Dendritic cell treated with granulocyte-macrophage colony-stimulating factor and Interleukin-4, amounts not matched to agents 40 ng/mL and 50 ng/mL, for 4 days (primary cell): ENCODE measurements at regions of chr5 and their contacts with region 1.

Region 1: DNA sequence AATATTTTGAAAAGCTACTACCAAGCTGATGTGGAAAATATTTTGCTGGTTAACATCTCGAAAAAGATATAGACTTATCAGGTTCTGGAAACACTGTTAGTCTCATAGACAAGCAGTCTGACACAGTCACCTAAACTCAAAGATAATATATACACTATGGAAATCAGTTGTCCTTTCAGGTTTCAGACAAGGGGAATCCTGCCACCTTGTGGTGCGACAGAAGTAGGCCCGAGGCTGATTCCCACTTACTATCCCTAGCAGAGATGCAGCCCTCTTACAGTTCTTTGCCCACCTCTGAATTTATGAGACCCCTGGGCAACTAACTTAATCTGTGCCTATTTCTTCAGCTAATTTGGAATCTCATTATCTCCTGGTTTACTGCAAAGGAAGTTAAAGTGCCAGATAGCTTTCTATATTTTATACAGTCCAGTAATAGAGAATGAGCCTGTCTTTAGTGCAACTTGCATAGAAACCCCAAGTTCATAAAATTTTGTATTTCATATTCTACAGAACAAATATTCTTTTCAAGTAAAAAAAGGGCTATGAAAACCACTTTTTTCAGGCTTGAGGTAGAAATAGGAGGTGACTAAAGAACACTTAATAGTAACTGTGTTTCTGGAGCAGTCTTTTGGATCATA is 16.9 kb downstream of the RAD1 start:
- H3K4me3 Mint-ChIP-seq: no peak overlapping the region
- H3K27ac Mint-ChIP-seq: no peak overlapping the region
- H3K4me1 Mint-ChIP-seq: peaks cover 6% of the 10 kb centered on the region
- H3K27me3 Mint-ChIP-seq: no peaks in the 10 kb centered on the region

Region 2: DNA sequence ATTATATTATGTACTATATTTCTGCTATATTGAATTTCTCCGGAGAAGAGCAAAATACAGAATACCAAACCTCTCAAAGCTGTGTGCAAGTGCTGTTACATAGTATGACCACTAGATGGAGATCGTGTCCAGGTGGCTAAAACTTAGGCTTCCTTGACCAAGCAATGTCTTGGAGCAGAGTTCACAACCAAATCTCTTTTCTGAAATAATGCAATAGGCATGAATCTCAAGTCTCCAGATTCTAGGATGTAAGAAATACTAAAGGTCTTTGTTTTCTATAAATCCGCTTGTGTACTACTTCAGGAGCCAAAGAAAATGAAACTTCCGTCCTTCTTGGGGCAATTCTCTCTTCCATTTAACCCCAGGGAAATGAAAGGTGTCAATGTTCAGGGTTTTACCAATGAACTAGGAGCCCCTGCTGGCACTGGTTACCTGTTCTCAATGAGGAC is 423.8 kb before region 1 on chr5:
- intact Hi-C with region 1: loop called (anchors 5 kb)
- H3K4me3 Mint-ChIP-seq: no peak overlapping the region
- H3K27ac Mint-ChIP-seq: no peak overlapping the region
- H3K4me1 Mint-ChIP-seq: no peaks in the 10 kb centered on the region
- H3K27me3 Mint-ChIP-seq: peaks cover 2% of the 10 kb centered on the region

Region 3: GRCh38 chr5:34486160-34486848 is 412.1 kb before region 1 on chr5:
- intact Hi-C with region 1: loop called (anchors 1 kb)
- H3K4me3 Mint-ChIP-seq: no peak overlapping the region
- H3K27ac Mint-ChIP-seq: no peak overlapping the region
- H3K4me1 Mint-ChIP-seq: no peaks in the 10 kb centered on the region
- H3K27me3 Mint-ChIP-seq: peaks cover 13% of the 10 kb centered on the region

Region 4: GRCh38 chr5:34522599-34523386 is 375.6 kb before region 1 on chr5:
- intact Hi-C with region 1: loop called (anchors 1 kb)
- H3K4me3 Mint-ChIP-seq: no peak overlapping the region
- H3K27ac Mint-ChIP-seq: no peak overlapping the region
- H3K4me1 Mint-ChIP-seq: no peaks in the 10 kb centered on the region
- H3K27me3 Mint-ChIP-seq: peaks cover 3% of the 10 kb centered on the region

Region 5: DNA sequence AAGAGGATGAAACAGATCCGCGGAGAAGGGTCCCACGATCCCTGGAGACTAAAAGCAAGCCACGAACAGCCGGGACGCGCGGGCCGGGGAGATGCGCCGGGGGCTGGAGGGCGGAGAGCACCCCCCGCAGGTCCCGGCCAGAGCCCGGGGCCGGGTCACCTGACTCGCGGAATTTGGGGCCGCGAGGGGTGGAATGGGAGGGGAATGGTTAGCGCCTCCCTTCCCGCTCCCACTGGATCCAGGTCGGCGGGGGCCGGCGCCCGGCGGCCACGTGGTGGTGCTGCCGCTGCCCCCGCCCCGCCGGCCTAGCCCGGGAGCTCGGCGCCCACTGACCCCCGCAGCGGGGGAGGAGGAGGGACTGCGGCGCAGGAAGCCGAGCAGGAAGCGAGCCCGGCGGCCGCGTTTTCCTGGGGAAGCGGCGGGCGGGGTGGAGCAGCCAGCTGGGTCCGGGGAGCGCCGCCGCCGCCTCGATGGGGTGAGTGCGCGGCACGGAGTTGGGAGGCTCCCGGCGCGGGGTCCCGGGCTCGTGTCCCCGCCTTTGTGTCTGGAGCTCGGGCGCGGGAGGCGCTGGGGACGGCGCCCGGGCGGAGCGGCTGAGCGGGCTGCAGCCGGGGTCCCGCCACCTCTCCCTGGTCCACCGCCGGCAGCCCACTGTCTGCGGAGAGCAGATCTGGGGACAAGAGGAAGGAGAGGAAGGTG is 242.2 kb before region 1 on chr5 and contains the start of gene RAI14:
- intact Hi-C with region 1: loop called (anchors 10 kb)
- H3K4me3 Mint-ChIP-seq: peak within 1 kb of the TSS; percentile 75
- H3K27ac Mint-ChIP-seq: no peak within 1 kb of the TSS
- H3K4me1 Mint-ChIP-seq: peaks cover 20% of the 10 kb centered on the region
- H3K27me3 Mint-ChIP-seq: peaks cover 70% of the 10 kb centered on the region

Region 6: GRCh38 chr5:34717426-34718327 is 180.7 kb before region 1 on chr5:
- intact Hi-C with region 1: no loop called
- H3K4me3 Mint-ChIP-seq: no peak overlapping the region
- H3K27ac Mint-ChIP-seq: no peak overlapping the region
- H3K4me1 Mint-ChIP-seq: no peaks in the 10 kb centered on the region
- H3K27me3 Mint-ChIP-seq: no peaks in the 10 kb centered on the region